CD8-positive, alpha-beta T cell (primary cell): ENCODE measurements at regions of chr15 and their contacts with region 1.

Region 1: DNA sequence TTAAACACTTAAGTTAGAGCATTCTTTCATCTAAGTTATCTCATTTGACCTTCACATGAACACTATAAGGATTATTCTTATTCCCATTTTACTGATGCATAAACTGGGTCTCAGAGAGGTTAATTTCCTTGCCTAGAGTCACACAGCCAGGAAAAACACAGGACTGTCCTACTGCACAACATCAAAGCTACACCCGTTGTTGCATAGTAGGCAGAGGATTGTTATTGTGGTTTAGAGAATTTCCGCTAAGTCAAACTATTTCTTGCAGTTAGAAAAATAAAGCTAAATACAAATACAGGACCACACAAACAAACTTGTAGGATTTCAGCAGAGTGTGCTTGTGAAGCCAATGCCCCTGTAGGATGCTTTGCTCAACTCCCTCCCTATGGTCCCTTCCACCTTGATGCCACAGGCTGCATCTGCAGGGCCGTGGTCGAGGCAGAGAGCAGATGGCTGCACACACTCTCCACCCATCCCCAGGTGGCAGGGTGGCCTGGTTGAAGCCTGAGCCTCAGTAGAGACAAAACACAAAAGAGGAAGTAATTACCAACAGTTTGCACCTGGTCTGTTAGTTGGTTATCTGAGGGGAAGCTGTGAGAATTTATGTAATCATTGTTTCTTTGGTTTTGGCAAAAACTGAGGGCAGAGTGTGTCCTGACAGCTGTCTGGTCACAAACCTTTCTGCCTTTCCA is 41.1 kb upstream of the SKOR1 start:
- DNase-seq: peak in 3 of 9 experiments; percentile 32 to 61 (median 49)
- ATAC-seq: peak; percentile 27
- H3K4me3 ChIP-seq: no peak overlapping the region
- H3K4me3 Mint-ChIP-seq: peak overlapping the region; percentile 27
- H3K27ac ChIP-seq: peak overlapping the region in 1 of 2 experiments; percentile 12
- H3K27ac Mint-ChIP-seq: peak overlapping the region; percentile 85
- H3K4me1 ChIP-seq: peaks cover 27% of the 10 kb centered on the region
- H3K4me1 Mint-ChIP-seq: peaks cover 37% of the 10 kb centered on the region
- H3K27me3 ChIP-seq: no peaks in the 10 kb centered on the region
- H3K27me3 Mint-ChIP-seq: no peaks in the 10 kb centered on the region
- CTCF ChIP-seq: no peak

Region 2: DNA sequence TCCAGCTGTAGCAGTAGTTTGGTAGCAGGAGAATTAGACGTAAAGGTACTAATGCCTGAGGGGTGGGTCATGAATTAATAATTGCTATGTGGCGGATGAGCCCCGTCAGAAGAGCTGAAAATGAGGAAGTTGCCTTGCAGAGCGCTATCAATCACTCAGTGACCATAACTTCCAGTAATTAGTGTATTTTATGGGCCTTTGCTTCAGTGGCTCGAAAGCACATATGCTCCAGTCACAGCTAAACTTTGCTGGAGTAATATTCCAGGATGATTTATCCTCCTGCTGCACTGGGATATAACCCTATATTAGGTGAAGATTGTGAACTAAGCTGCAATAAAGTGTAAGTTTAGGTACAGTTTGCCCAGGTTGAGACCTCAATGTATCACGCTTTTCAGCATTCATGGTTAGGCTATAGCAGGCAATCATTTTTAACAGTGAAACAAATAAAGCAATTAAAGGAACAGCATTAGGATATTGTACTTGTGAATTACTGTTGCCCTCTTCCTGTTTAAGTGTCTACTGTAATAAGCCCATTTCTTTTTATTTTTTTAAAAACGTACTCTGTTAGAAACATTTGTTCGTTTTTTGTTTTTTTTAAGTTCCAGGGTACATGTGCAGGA is 63.6 kb before region 1 on chr15:
- CTCF ChIA-PET with region 1: no interaction called
- POLR2A ChIA-PET with region 1: no interaction called
- intact Hi-C with region 1: loop called in 1 of 2 experiments (anchors 10 kb)
- DNase-seq: no peak
- ATAC-seq: no peak
- H3K4me3 ChIP-seq: no peak overlapping the region
- H3K4me3 Mint-ChIP-seq: no peak overlapping the region
- H3K27ac ChIP-seq: no peak overlapping the region
- H3K27ac Mint-ChIP-seq: no peak overlapping the region
- H3K4me1 ChIP-seq: peaks cover 9% of the 10 kb centered on the region
- H3K4me1 Mint-ChIP-seq: peaks cover 19% of the 10 kb centered on the region
- H3K27me3 ChIP-seq: no peaks in the 10 kb centered on the region
- H3K27me3 Mint-ChIP-seq: no peaks in the 10 kb centered on the region
- CTCF ChIP-seq: no peak

Region 3: DNA sequence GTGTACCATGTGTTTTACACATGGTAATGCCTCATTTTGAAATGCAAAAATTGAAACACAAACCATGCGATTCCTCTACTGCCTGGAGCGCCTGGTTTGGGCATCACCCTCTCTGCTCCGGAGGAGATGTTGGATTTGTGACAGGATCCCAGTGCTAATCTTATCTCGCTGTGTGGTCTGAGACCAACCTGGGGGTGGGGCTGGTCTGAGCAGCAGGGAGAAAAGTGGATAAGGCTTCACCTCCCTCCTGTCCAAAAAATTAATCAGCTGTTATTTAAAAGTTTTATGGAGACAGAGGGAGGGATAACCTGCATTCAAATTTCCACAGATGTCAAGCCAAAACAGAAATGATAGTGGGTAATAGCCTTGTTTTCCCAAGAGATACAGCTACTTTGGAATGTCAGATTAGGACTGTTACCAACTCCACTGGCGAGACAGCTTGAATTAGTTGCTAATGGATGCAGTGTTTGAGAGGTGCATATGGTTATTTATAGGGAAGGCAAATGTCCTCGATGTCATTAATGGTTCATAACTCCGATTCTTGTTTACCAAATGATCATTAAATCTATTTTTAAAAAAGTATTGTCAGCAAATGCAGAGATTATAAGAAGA is 12.9 kb before region 1 on chr15:
- CTCF ChIA-PET with region 1: interaction called, 14 read pairs
- POLR2A ChIA-PET with region 1: no interaction called
- intact Hi-C with region 1: no loop called
- DNase-seq: no peak
- ATAC-seq: no peak
- H3K4me3 ChIP-seq: no peak overlapping the region
- H3K4me3 Mint-ChIP-seq: no peak overlapping the region
- H3K27ac ChIP-seq: no peak overlapping the region
- H3K27ac Mint-ChIP-seq: no peak overlapping the region
- H3K4me1 ChIP-seq: no peaks in the 10 kb centered on the region
- H3K4me1 Mint-ChIP-seq: peaks cover 4% of the 10 kb centered on the region
- H3K27me3 ChIP-seq: no peaks in the 10 kb centered on the region
- H3K27me3 Mint-ChIP-seq: no peaks in the 10 kb centered on the region
- CTCF ChIP-seq: no peak

Region 4: GRCh38 chr15:67833710-67834511 is 49.7 kb after region 1 on chr15:
- CTCF ChIA-PET with region 1: interaction called, 34 read pairs
- POLR2A ChIA-PET with region 1: interaction called, 10 read pairs
- intact Hi-C with region 1: loop called (anchors 1 kb)
- DNase-seq: peak in 5 of 9 experiments; percentile 30 to 69 (median 47)
- ATAC-seq: peak; percentile 37
- H3K4me3 ChIP-seq: peak overlapping the region; percentile 42 to 51
- H3K4me3 Mint-ChIP-seq: peak overlapping the region; percentile 83
- H3K27ac ChIP-seq: no peak overlapping the region
- H3K27ac Mint-ChIP-seq: no peak overlapping the region
- H3K4me1 ChIP-seq: peaks cover 48% of the 10 kb centered on the region
- H3K4me1 Mint-ChIP-seq: peaks cover 51% of the 10 kb centered on the region
- H3K27me3 ChIP-seq: peaks cover 46 to 57% of the 10 kb centered on the region in 2 experiments
- H3K27me3 Mint-ChIP-seq: peaks cover 53% of the 10 kb centered on the region
- CTCF ChIP-seq: peak; percentile 40

Region 5: GRCh38 chr15:68154923-68155559 is 370.8 kb after region 1 on chr15:
- CTCF ChIA-PET with region 1: no interaction called
- POLR2A ChIA-PET with region 1: no interaction called
- intact Hi-C with region 1: loop called in 1 of 2 experiments (anchors 10 kb)
- DNase-seq: peak in 4 of 9 experiments; percentile 12 to 46 (median 24)
- ATAC-seq: no peak
- H3K4me3 ChIP-seq: no peak overlapping the region
- H3K4me3 Mint-ChIP-seq: no peak overlapping the region
- H3K27ac ChIP-seq: no peak overlapping the region
- H3K27ac Mint-ChIP-seq: no peak overlapping the region
- H3K4me1 ChIP-seq: no peaks in the 10 kb centered on the region
- H3K4me1 Mint-ChIP-seq: peaks cover 3% of the 10 kb centered on the region
- H3K27me3 ChIP-seq: no peaks in the 10 kb centered on the region
- H3K27me3 Mint-ChIP-seq: no peaks in the 10 kb centered on the region
- CTCF ChIP-seq: peak; percentile 48